K562 (cell line): ENCODE measurements at regions of chr1 and their contacts with region 1.

Region 1: DNA sequence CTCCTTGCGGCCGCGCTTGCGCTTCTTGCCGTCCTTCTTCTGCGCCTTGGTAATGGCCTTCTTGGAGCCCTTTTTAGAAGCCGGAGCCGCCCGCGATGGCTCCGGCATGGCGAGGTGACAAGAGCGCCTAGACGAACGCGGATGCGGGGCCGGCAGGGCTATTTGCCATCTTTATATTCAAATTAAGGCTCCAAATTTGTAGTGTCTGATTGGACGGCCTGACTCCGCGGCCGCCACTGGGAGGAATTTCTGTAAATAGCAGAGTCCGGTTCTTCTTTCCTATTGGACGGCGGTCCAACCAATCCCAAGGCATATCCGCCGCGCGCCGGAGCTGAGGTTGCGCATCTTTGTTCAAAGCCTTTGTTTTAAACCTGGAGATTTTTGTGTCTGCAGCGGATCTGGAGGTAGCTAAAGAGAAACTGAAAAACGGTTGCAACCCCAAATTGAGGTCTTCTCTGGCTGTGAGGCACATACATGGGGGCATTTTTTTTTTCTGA is 22.6 kb upstream of the RNF187 start:
- DNase-seq: no peak
- ATAC-seq: no peak
- H3K4me3 ChIP-seq: no peak overlapping the region
- H3K27ac ChIP-seq: no peak overlapping the region
- H3K4me1 ChIP-seq: peaks cover 22 to 26% of the 10 kb centered on the region in 2 experiments
- H3K27me3 ChIP-seq: peaks cover 2 to 16% of the 10 kb centered on the region in 2 experiments; a peak in 3 of 5 replicates
- CTCF ChIP-seq: no peak
- EP300 ChIP-seq: no peak
- POLR2A ChIP-seq: no peak
- RAD21 ChIP-seq: no peak

Region 2: DNA sequence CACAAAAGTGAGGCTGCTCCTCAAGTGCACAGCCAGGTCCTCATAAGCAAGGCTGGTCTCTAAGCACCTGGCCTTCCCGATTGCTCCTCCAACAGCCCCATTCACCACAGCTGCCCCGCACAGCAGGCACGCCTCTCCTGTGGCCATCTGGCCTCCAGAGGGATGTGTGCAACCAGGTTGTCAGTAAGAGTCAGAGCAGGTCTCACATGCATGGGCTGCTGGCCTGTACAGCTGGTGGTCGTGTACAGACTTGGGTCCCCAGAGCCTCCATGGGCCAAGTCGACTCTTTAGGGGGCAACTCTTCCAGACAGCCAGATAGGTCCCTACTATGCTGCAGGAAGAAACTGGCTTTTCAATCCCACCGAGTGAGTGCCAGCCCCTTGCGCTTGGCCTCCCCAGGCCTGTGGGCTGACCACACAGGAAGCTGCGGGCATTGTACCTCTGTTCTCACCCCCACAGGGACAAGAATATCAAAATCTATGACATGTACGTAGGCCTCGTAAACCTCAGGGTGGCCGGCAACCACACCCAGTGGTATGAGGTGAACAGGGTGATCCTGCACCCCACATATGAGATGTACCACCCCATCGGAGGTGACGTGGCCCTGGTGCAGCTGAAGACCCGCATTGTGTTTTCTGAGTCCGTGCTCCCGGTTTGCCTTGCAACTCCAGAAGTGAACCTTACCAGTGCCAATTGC is 647.6 kb before region 1 on chr1:
- CTCF ChIA-PET with region 1: no interaction called
- POLR2A ChIA-PET with region 1: no interaction called
- in situ Hi-C with region 1: no loop called
- intact Hi-C with region 1: no loop called
- DNase-seq: no peak
- ATAC-seq: peak; percentile 34; the same call in 2 of the 3 replicates
- H3K4me3 ChIP-seq: no peak overlapping the region
- H3K27ac ChIP-seq: no peak overlapping the region
- H3K4me1 ChIP-seq: peaks cover 0 to 9% of the 10 kb centered on the region in 2 experiments; a peak in 1 of 5 replicates
- H3K27me3 ChIP-seq: peaks cover 0 to 9% of the 10 kb centered on the region in 2 experiments; a peak in 1 of 5 replicates
- CTCF ChIP-seq: no peak
- EP300 ChIP-seq: no peak
- POLR2A ChIP-seq: no peak
- RAD21 ChIP-seq: no peak

Region 3: GRCh38 chr1:228392111-228392936 is 72.2 kb before region 1 on chr1:
- CTCF ChIA-PET with region 1: no interaction called
- POLR2A ChIA-PET with region 1: no interaction called
- in situ Hi-C with region 1: no loop called
- intact Hi-C with region 1: no loop called
- DNase-seq: peak; percentile 55 to 74 (median 58)
- ATAC-seq: peak; percentile 68
- H3K4me3 ChIP-seq: no peak overlapping the region
- H3K27ac ChIP-seq: peak overlapping the region; percentile 58; the same call in 2 of the 3 replicates
- H3K4me1 ChIP-seq: peaks cover 11 to 38% of the 10 kb centered on the region in 2 experiments; a peak in 4 of 5 replicates
- H3K27me3 ChIP-seq: no peaks in the 10 kb centered on the region
- CTCF ChIP-seq: no peak
- EP300 ChIP-seq: peak; percentile 36; the same call in 1 of the 2 replicates
- POLR2A ChIP-seq: no peak; the same call in 1 of the 2 replicates
- RAD21 ChIP-seq: no peak

Region 4: DNA sequence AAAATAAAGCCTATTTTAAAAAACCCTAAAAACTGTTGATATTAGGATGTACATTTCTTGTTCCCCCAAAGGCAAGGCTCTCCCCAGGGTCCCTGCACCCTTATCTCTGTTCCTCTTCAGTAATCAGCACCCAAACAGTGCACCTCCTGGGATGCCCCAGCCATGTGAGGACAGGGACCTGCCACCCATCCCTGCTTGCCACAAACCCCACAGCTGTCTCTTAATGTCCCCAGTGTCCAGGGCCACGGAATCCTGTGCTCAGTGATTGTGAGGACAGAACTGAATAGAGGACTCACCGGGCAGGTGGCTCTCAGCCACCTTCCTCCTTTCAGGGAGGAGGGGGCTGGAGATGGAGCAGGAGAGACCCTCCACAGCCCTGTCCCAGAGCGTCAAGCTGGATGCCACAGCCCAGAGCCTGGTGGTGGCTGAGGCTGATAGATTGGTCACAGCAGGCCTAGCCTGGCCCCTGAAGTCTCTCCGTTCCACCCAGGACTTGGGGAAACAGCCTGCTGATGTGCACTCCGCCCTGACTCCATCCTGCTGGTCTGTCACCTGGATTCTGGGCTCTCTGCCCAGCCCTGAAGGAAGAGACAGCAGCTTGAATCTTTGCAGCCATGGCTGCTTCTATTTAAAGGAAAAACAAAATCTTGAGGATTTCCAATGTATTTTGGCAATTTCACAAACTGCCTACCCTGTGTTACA is 45.7 kb after region 1 on chr1:
- CTCF ChIA-PET with region 1: interaction called, 3 read pairs
- POLR2A ChIA-PET with region 1: interaction called, 52 read pairs
- in situ Hi-C with region 1: loop called (anchors 5 kb)
- intact Hi-C with region 1: no loop called
- DNase-seq: no peak
- ATAC-seq: no peak
- H3K4me3 ChIP-seq: no peak overlapping the region
- H3K27ac ChIP-seq: no peak overlapping the region
- H3K4me1 ChIP-seq: peaks cover 52 to 53% of the 10 kb centered on the region in 2 experiments
- H3K27me3 ChIP-seq: no peaks in the 10 kb centered on the region
- CTCF ChIP-seq: no peak
- EP300 ChIP-seq: no peak
- POLR2A ChIP-seq: no peak
- RAD21 ChIP-seq: no peak